ENCODE measurements at regions of chr1 and their contacts with region 1.

Region 1: DNA sequence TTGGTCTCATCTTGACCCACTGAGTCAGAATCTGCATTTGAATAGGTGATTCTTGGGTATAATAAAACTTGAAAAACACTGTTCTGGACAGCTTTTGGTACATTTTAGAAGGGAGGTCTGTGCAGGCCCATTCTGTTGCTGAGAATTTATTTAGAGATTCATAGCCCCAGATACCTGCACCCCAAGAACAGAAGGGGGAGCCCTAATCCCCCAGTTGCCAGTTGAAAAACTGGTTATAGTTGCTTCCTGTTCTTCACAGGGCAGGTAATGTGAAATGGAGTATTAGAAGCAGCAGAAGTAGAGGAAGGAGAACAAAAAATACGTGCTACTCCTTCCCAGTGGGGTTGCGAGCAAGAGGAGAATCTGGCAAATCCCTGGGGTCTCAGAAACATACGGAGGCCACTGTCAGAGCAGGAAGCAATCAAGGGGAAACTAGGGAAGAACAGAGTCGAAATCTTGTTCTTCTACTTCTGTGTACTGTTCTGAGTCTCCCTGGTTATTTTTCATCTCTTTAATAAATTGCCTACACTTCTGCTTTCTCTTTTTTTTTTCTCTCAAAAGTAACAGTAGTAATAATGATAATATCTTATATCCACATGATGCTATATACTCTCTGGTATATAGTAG is 4.6 kb upstream of the CLCA2 start:
- DNase-seq: peak in 7 of 9 donors; percentile 35 to 74 (median 65)
- ATAC-seq: peak; percentile 89
- H3K4me3 ChIP-seq: no peak overlapping the region
- H3K4me3 Mint-ChIP-seq: peak overlapping the region in 9 of 10 donors; percentile 53 to 85 (median 72)
- H3K27ac ChIP-seq: no peak overlapping the region
- H3K27ac Mint-ChIP-seq: peak overlapping the region in 8 of 9 donors; percentile 13 to 85 (median 32)
- H3K4me1 ChIP-seq: no peaks in the 10 kb centered on the region
- H3K4me1 Mint-ChIP-seq: peaks cover 4 to 8% (median 6%) of the 10 kb centered on the region in 7 donors
- H3K27me3 ChIP-seq: no peaks in the 10 kb centered on the region
- H3K27me3 Mint-ChIP-seq: peaks cover 0 to 6% (median 0%) of the 10 kb centered on the region in 5 donors

Region 2: GRCh38 chr1:86156566-86157455 is 262.6 kb before region 1 on chr1 and contains the start of gene COL24A1:
- CTCF ChIA-PET with region 1: no interaction called
- POLR2A ChIA-PET with region 1: no interaction called
- intact Hi-C with region 1: no loop called
- DNase-seq: peak in 1 of 9 donors; percentile 5
- ATAC-seq: peak; percentile 19
- H3K4me3 ChIP-seq: no peak within 1 kb of the TSS
- H3K4me3 Mint-ChIP-seq: peak within 1 kb of the TSS in 6 of 10 donors; percentile 8 to 57 (median 48)
- H3K27ac ChIP-seq: no peak within 1 kb of the TSS
- H3K27ac Mint-ChIP-seq: no peak within 1 kb of the TSS
- H3K4me1 ChIP-seq: no peaks in the 10 kb centered on the region
- H3K4me1 Mint-ChIP-seq: peaks cover 0 to 11% (median 7%) of the 10 kb centered on the region in 7 donors
- H3K27me3 ChIP-seq: no peaks in the 10 kb centered on the region
- H3K27me3 Mint-ChIP-seq: peaks cover 29 to 43% (median 34%) of the 10 kb centered on the region in 5 donors
- total RNA-seq, gene COL24A1: 0.40 to 1.5 TPM in 2 of 5 experiments, not detected in the others

Region 3: DNA sequence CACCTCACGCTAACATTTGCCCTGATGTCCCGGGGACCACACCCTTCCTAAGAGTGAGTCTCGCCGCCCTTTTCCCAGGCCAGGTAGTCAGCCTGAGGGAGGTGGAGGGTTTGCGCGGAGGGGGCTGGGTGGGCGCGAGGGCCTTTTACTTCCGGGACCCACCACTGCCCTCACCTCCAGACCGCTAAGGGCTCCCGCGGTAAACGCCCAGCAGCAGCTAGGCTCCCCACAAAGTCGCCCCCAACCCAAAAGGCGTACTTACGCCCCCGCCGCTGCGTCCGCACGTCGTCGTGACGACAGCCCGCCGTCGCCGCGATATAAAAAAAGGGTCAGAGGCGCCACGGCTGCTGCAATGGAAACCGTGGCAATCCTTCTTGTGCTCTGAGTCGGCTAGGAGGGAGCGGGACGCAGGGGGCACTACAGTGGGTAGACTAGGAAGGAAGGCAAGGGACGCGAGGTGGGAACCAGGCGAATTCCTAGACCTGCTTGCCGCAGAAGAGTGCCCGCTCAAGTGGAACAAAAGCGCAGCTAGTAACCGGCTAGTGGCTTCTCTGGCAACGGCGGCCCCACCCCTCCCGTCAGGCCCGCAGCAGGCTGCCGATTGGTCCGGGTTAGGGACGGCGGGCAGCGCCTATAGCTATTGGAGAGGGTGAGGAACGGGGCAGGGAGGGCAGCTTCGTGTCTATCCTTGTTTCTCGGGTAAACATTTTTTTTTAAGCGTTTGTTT is 23.5 kb before region 1 on chr1 and contains the start of gene ODF2L:
- CTCF ChIA-PET with region 1: interaction called, 4 read pairs
- POLR2A ChIA-PET with region 1: no interaction called
- intact Hi-C with region 1: loop called (anchors 1 to 2 kb)
- DNase-seq: peak; percentile 73 to 92 (median 90)
- ATAC-seq: peak; percentile 100
- H3K4me3 ChIP-seq: peak within 1 kb of the TSS; percentile 80
- H3K4me3 Mint-ChIP-seq: peak within 1 kb of the TSS; percentile 90 to 100 (median 98)
- H3K27ac ChIP-seq: peak within 1 kb of the TSS; percentile 90
- H3K27ac Mint-ChIP-seq: peak within 1 kb of the TSS; percentile 94 to 99 (median 98)
- H3K4me1 ChIP-seq: peaks cover 17 to 20% of the 10 kb centered on the region in 2 donors
- H3K4me1 Mint-ChIP-seq: peaks cover 23 to 70% (median 58%) of the 10 kb centered on the region in 7 donors
- H3K27me3 ChIP-seq: no peaks in the 10 kb centered on the region
- H3K27me3 Mint-ChIP-seq: peaks cover 0 to 7% (median 0%) of the 10 kb centered on the region in 5 donors
- total RNA-seq, gene ODF2L: 50.3 to 75.3 (median 52.2) TPM

Region 4: DNA sequence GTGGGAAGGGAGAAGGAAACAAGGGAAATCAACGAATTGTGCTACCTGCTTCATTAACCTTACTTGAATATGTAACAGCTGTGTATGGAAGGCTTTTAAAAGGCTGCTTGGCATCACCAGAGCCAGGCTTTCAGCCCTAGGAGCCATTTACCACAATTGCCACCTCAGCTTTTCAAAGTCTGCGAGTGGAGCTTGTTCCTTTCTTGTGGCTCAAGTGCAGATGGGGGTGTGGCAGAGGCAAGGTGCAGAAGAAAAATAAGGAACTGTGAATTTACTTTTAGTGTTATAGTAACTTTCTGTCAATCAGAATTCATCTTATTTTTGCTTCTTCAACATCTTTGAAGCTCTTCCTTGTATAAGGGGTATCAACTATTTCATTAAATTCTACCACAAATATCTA is 22.2 kb after region 1 on chr1:
- CTCF ChIA-PET with region 1: no interaction called
- POLR2A ChIA-PET with region 1: no interaction called
- intact Hi-C with region 1: loop called in 1 of 2 experiments (anchors 1 kb)
- DNase-seq: peak in 8 of 9 donors; percentile 8 to 78 (median 64)
- ATAC-seq: peak; percentile 94
- H3K4me3 ChIP-seq: no peak overlapping the region
- H3K4me3 Mint-ChIP-seq: peak overlapping the region in 7 of 10 donors; percentile 3 to 42 (median 8)
- H3K27ac ChIP-seq: no peak overlapping the region
- H3K27ac Mint-ChIP-seq: peak overlapping the region in 1 of 9 donors; percentile 6
- H3K4me1 ChIP-seq: peaks cover 0 to 12% of the 10 kb centered on the region in 2 donors
- H3K4me1 Mint-ChIP-seq: peaks cover 0 to 13% (median 10%) of the 10 kb centered on the region in 7 donors
- H3K27me3 ChIP-seq: no peaks in the 10 kb centered on the region
- H3K27me3 Mint-ChIP-seq: peaks cover 0 to 18% (median 11%) of the 10 kb centered on the region in 5 donors

Region 5: DNA sequence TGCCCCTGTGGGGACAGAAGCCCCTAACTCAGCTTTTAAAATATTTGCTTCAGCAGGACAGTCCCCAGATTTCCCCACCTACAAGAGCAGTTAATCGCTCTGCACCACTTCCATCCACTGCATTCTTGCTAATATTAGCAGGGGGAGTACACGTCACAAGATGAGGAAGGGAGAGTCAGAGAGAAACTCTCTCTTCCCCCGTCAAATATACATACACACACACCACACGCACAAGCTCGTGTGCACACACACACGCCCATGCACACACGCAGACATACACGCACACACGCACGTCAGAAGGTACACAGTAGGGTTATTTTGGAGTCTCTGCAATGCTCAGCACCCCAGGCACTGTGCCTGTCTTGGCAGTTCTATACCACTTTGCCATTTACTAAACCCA is 51.5 kb after region 1 on chr1:
- CTCF ChIA-PET with region 1: interaction called, 4 read pairs
- POLR2A ChIA-PET with region 1: no interaction called
- intact Hi-C with region 1: loop called in 1 of 2 experiments (anchors 1 kb)
- DNase-seq: no peak
- ATAC-seq: no peak
- H3K4me3 ChIP-seq: no peak overlapping the region
- H3K4me3 Mint-ChIP-seq: no peak overlapping the region
- H3K27ac ChIP-seq: no peak overlapping the region
- H3K27ac Mint-ChIP-seq: no peak overlapping the region
- H3K4me1 ChIP-seq: no peaks in the 10 kb centered on the region
- H3K4me1 Mint-ChIP-seq: peaks cover 0 to 3% (median 0%) of the 10 kb centered on the region in 7 donors
- H3K27me3 ChIP-seq: peaks cover 0 to 3% of the 10 kb centered on the region in 2 donors
- H3K27me3 Mint-ChIP-seq: peaks cover 7 to 35% (median 11%) of the 10 kb centered on the region in 5 donors

Region 6: DNA sequence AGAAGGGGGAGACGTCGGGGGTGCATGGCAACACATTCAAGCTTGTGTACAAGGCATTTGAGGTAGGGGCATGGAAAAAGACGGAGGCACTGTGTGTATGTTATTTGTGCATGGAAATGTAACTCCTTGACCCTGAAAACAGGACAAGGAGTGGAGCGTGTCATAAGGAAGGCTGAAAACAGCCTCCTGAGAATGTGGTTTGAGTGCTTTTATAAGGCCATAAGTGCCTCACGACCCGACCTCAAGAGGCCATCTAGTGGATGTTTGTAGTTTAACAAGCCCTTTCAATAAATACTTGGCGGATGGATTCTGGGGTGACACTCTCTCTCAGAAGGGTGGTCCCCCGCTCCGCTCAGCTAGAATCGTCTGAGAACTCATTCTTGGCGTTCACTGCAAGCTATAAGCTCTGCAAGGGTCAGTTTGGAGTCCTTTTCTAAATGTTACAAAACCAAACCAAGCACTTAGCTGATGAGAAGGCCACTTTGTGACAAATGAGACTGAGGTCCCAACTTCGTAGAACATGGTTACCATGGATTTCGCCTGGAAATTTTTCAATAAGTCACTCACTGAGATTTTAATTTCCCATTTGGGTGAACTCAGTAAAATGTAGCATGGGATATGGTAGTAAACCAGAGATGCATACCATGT is 88.7 kb after region 1 on chr1:
- CTCF ChIA-PET with region 1: no interaction called
- POLR2A ChIA-PET with region 1: no interaction called
- intact Hi-C with region 1: loop called in 1 of 2 experiments (anchors 1 kb)
- DNase-seq: peak in 5 of 9 donors; percentile 13 to 30 (median 25)
- ATAC-seq: peak; percentile 41
- H3K4me3 ChIP-seq: no peak overlapping the region
- H3K4me3 Mint-ChIP-seq: no peak overlapping the region
- H3K27ac ChIP-seq: no peak overlapping the region
- H3K27ac Mint-ChIP-seq: no peak overlapping the region
- H3K4me1 ChIP-seq: no peaks in the 10 kb centered on the region
- H3K4me1 Mint-ChIP-seq: peaks cover 0 to 8% (median 0%) of the 10 kb centered on the region in 7 donors
- H3K27me3 ChIP-seq: no peaks in the 10 kb centered on the region
- H3K27me3 Mint-ChIP-seq: peaks cover 0 to 29% (median 6%) of the 10 kb centered on the region in 5 donors

Region 7: DNA sequence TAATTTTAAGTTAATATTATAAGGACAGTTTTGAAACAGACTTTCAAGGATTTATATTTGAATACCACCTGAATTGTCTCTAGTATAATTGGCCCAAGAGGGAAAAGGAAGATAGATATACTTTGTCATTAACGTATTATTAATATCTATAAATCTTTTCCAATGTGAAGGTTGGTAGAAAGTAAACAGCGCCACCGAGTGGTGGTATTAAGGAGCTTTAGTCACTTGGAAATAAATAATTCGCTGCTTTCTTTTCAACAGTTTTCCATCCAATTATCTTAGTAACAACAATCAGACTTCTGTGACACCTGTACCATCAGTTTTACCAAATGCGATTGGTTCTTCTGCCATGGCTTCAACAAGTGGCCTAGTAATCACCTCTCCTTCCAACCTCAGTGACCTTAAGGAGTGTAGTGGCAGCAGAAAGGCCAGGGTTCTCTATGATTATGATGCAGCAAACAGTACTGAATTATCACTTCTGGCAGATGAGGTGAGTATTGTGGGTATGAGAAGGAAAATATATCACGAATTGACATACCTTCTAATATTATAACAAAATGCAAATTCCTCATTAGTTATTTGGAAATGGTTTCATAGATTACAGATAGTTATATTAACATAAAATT is 322.7 kb after region 1 on chr1:
- CTCF ChIA-PET with region 1: no interaction called
- POLR2A ChIA-PET with region 1: no interaction called
- intact Hi-C with region 1: loop called in 1 of 2 experiments (anchors 10 kb)
- DNase-seq: peak in 7 of 9 donors; percentile 12 to 43 (median 26)
- ATAC-seq: no peak
- H3K4me3 ChIP-seq: no peak overlapping the region
- H3K4me3 Mint-ChIP-seq: peak overlapping the region in 1 of 10 donors; percentile 60
- H3K27ac ChIP-seq: no peak overlapping the region
- H3K27ac Mint-ChIP-seq: no peak overlapping the region
- H3K4me1 ChIP-seq: peaks cover 5 to 12% of the 10 kb centered on the region in 2 donors
- H3K4me1 Mint-ChIP-seq: peaks cover 0 to 6% (median 0%) of the 10 kb centered on the region in 7 donors
- H3K27me3 ChIP-seq: no peaks in the 10 kb centered on the region
- H3K27me3 Mint-ChIP-seq: no peaks in the 10 kb centered on the region